Activated naive CD4-positive, alpha-beta T cell treated with anti-CD3 and anti-CD28 coated beads, Interleukin-2, amount 10 ng/mL, durations not matched to agents 7 days and 5 days (primary cell): ENCODE measurements at regions of chr10 and their contacts with region 1.

Region 1: GRCh38 chr10:34994565-34995142 is 95.5 kb downstream of the CUL2 start:
- DNase-seq: peak; percentile 61
- H3K4me3 Mint-ChIP-seq: no peak overlapping the region
- H3K27ac Mint-ChIP-seq: no peak overlapping the region
- H3K4me1 Mint-ChIP-seq: peaks cover 9% of the 10 kb centered on the region
- H3K27me3 Mint-ChIP-seq: no peaks in the 10 kb centered on the region

Region 2: GRCh38 chr10:34916314-34916713 is 78.3 kb before region 1 on chr10:
- CTCF ChIA-PET with region 1: no interaction called
- DNase-seq: no peak
- H3K4me3 Mint-ChIP-seq: no peak overlapping the region
- H3K27ac Mint-ChIP-seq: no peak overlapping the region
- H3K4me1 Mint-ChIP-seq: no peaks in the 10 kb centered on the region
- H3K27me3 Mint-ChIP-seq: no peaks in the 10 kb centered on the region

Region 3: GRCh38 chr10:35019041-35020024 is 24.7 kb after region 1 on chr10:
- CTCF ChIA-PET with region 1: interaction called, 10 read pairs
- DNase-seq: no peak
- H3K4me3 Mint-ChIP-seq: no peak overlapping the region
- H3K27ac Mint-ChIP-seq: no peak overlapping the region
- H3K4me1 Mint-ChIP-seq: no peaks in the 10 kb centered on the region
- H3K27me3 Mint-ChIP-seq: no peaks in the 10 kb centered on the region

Region 4: GRCh38 chr10:35027567-35027966 is 32.9 kb after region 1 on chr10:
- CTCF ChIA-PET with region 1: interaction called, 22 read pairs
- DNase-seq: no peak
- H3K4me3 Mint-ChIP-seq: no peak overlapping the region
- H3K27ac Mint-ChIP-seq: no peak overlapping the region
- H3K4me1 Mint-ChIP-seq: no peaks in the 10 kb centered on the region
- H3K27me3 Mint-ChIP-seq: no peaks in the 10 kb centered on the region

Region 5: DNA sequence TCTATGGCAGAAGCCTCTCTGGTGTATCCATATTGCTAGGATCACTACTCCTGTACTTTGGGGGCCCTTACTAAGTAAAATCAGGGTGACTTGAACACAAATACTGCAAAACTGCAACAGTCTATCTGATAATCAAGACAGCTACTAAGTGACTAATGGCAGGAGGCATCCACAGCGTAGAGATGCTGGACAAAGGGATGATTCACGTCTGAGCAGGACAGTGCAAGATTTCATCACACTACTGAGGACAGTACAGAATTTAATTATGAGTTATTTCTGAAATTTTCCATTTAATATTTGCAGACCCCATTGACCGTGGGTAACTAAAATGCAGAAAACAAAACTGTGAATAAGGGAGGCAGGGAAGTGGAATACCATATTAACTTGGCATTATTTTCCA is 85.1 kb after region 1 on chr10:
- CTCF ChIA-PET with region 1: no interaction called
- DNase-seq: no peak
- H3K4me3 Mint-ChIP-seq: no peak overlapping the region
- H3K27ac Mint-ChIP-seq: no peak overlapping the region
- H3K4me1 Mint-ChIP-seq: peaks cover 9% of the 10 kb centered on the region
- H3K27me3 Mint-ChIP-seq: no peaks in the 10 kb centered on the region

Region 6: GRCh38 chr10:35126530-35127296 is 132.1 kb after region 1 on chr10 and contains the start of gene CREM:
- CTCF ChIA-PET with region 1: interaction called, 20 read pairs
- DNase-seq: peak; percentile 100
- H3K4me3 Mint-ChIP-seq: peak within 1 kb of the TSS; percentile 86
- H3K27ac Mint-ChIP-seq: peak within 1 kb of the TSS; percentile 96
- H3K4me1 Mint-ChIP-seq: peaks cover 55% of the 10 kb centered on the region
- H3K27me3 Mint-ChIP-seq: no peaks in the 10 kb centered on the region

Region 7: DNA sequence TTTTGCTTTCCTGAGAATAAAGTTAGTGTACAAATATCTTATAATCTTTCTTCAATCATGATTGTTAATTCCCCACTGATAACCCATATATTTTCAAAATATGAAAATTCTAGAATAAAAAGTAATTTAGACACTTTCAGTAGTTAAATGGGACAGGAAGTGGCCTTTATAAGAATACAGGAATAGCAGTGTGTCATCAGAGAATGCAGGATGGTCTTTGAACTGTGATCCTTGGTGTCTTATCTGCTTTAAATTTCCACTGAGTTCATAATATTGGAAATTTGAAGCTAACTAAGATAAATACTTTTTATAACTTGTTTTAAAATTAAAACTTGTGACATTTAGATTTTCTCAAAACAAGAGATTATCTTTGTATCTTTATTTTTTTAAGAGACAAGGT is 207.4 kb after region 1 on chr10:
- CTCF ChIA-PET with region 1: no interaction called
- DNase-seq: no peak
- H3K4me3 Mint-ChIP-seq: no peak overlapping the region
- H3K27ac Mint-ChIP-seq: no peak overlapping the region
- H3K4me1 Mint-ChIP-seq: peaks cover 66% of the 10 kb centered on the region
- H3K27me3 Mint-ChIP-seq: no peaks in the 10 kb centered on the region

Region 8: DNA sequence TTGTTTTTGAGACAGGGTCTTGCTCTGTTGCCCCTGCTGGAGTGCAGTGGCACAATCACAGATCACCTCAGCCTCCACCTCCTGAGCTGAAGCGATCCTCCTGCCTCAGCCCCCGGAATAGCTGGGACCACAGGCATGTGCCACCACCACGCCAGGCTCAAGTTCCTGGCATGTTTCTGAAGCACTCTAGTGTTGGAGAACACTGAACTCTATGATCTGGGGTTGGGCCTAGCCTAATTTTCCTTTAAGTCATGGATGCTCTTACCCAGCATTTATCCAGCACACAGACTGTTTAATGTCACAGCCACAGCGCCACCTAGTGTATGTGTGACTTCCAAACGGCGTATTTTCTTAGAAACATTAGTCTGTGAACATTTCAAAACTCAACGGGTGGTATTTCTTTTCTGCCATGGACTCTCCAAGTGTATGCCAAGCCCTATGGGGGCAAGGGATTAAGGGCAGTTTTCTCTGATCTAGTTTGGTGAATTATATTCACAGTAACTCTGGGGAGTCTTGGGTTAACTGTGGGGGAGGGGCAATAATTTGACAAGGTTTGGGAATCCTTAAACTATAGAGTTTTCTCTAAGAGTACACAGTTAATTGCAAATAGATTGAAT is 223.8 kb after region 1 on chr10:
- CTCF ChIA-PET with region 1: interaction called, 16 read pairs
- DNase-seq: peak; percentile 91
- H3K4me3 Mint-ChIP-seq: no peak overlapping the region
- H3K27ac Mint-ChIP-seq: peak overlapping the region; percentile 71
- H3K4me1 Mint-ChIP-seq: peaks cover 40% of the 10 kb centered on the region
- H3K27me3 Mint-ChIP-seq: peaks cover 6% of the 10 kb centered on the region